PC-9 (cell line): ENCODE measurements at regions of chr2 and their contacts with region 1.

Region 1: GRCh38 chr2:173854840-173855239 is 110.3 kb downstream of the SP3 start:
- DNase-seq: peak; percentile 14 to 76
- H3K4me3 ChIP-seq: no peak overlapping the region
- H3K27ac ChIP-seq: no peak overlapping the region
- H3K4me1 ChIP-seq: no peaks in the 10 kb centered on the region
- H3K27me3 ChIP-seq: peaks cover under 1% of the 10 kb centered on the region; the same call in 1 of the 2 replicates
- CTCF ChIP-seq: no peak

Region 2: GRCh38 chr2:173783382-173783781 is 71.5 kb before region 1 on chr2:
- CTCF ChIA-PET with region 1: no interaction called
- POLR2A ChIA-PET with region 1: no interaction called
- intact Hi-C with region 1: no loop called
- DNase-seq: no peak
- H3K4me3 ChIP-seq: no peak overlapping the region
- H3K27ac ChIP-seq: no peak overlapping the region
- H3K4me1 ChIP-seq: no peaks in the 10 kb centered on the region
- H3K27me3 ChIP-seq: peaks cover 40% of the 10 kb centered on the region; the same call in 1 of the 2 replicates
- CTCF ChIP-seq: no peak

Region 3: GRCh38 chr2:174124181-174124580 is 269.3 kb after region 1 on chr2:
- CTCF ChIA-PET with region 1: interaction called, 15 read pairs
- POLR2A ChIA-PET with region 1: no interaction called
- intact Hi-C with region 1: no loop called
- DNase-seq: no peak
- H3K4me3 ChIP-seq: no peak overlapping the region
- H3K27ac ChIP-seq: no peak overlapping the region
- H3K4me1 ChIP-seq: peaks cover 47% of the 10 kb centered on the region
- H3K27me3 ChIP-seq: no peaks in the 10 kb centered on the region
- CTCF ChIP-seq: no peak